CD14-positive monocyte (primary cell): ENCODE measurements at regions of chr18 and their contacts with region 1.

Region 1: DNA sequence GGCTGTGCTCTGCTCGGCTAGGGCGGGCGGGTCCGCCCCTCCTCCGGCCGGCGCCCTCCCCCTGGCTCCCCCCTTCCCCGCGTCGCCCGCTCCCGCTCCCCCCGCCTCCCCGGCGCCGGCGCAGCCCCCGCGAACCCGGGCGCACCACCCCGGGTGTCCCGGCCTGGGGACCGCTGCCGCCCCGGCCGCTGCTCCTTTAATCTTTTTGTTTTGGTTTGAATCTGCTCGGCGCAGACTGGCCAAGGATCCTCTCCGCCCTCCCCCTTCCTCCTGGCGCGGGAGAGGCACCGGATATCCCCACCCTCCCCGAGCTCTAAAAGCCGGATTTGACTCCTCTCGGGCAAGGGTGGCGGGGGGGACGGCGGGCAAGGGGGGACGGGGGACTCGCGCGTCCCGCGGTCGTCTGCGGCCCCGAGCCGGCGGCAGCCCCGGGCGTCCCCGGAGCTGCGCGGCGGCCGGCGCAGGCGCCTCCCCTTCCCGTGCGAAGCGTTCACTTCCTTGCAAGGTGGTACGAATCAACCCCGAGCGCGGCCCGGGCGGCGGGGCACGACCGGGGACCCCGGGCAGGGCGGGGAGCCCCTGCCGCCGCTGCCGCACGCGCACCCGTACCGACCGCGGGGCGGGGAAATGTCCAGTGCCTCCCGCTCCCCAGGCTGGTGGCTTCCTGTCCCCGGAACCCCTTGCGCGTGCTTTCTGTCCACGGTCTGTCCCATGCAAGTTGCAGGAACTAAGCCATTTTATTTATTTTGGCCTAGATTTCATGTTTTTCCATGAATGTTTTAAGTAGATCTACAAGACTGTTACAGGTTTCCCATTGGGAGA is at the start of gene PTGR3:
- DNase-seq: peak; percentile 46 to 62 (median 59)
- H3K4me3 ChIP-seq: peak within 1 kb of the TSS; percentile 67 to 91 (median 89)
- H3K4me3 Mint-ChIP-seq: peak within 1 kb of the TSS; percentile 95 to 97
- H3K27ac ChIP-seq: peak within 1 kb of the TSS; percentile 79 to 86
- H3K27ac Mint-ChIP-seq: peak within 1 kb of the TSS; percentile 88 to 94 (median 91)
- H3K4me1 ChIP-seq: peaks cover 49 to 73% of the 10 kb centered on the region in 2 donors
- H3K4me1 Mint-ChIP-seq: peaks cover 63% of the 10 kb centered on the region
- H3K27me3 ChIP-seq: peaks cover 16 to 29% of the 10 kb centered on the region in 2 donors
- H3K27me3 Mint-ChIP-seq: peaks cover 2 to 30% (median 18%) of the 10 kb centered on the region in 3 donors
- CTCF ChIP-seq: no peak
- polyA plus RNA-seq, gene PTGR3: 15.5 to 27.5 (median 23.6) TPM

Region 2: GRCh38 chr18:75070625-75071483 is 138.5 kb before region 1 on chr18:
- intact Hi-C with region 1: loop called (anchors 10 kb)
- DNase-seq: peak; percentile 96 to 99 (median 96)
- H3K4me3 ChIP-seq: peak overlapping the region; percentile 26 to 68 (median 33)
- H3K4me3 Mint-ChIP-seq: peak overlapping the region; percentile 77 to 91
- H3K27ac ChIP-seq: peak overlapping the region; percentile 95 to 97
- H3K27ac Mint-ChIP-seq: peak overlapping the region; percentile 87 to 99 (median 98)
- H3K4me1 ChIP-seq: peaks cover 41 to 46% of the 10 kb centered on the region in 2 donors
- H3K4me1 Mint-ChIP-seq: peaks cover 48% of the 10 kb centered on the region
- H3K27me3 ChIP-seq: no peaks in the 10 kb centered on the region
- H3K27me3 Mint-ChIP-seq: peaks cover 0 to 3% (median 2%) of the 10 kb centered on the region in 3 donors
- CTCF ChIP-seq: no peak

Region 3: GRCh38 chr18:75247611-75248421 is 38.5 kb after region 1 on chr18:
- intact Hi-C with region 1: loop called in 1 of 2 experiments (anchors 5 kb)
- DNase-seq: peak in 1 of 3 donors; percentile 7
- H3K4me3 ChIP-seq: peak overlapping the region; percentile 36 to 74 (median 70)
- H3K4me3 Mint-ChIP-seq: peak overlapping the region; percentile 81 to 92
- H3K27ac ChIP-seq: peak overlapping the region in 1 of 2 donors; percentile 75
- H3K27ac Mint-ChIP-seq: peak overlapping the region; percentile 65 to 94 (median 80)
- H3K4me1 ChIP-seq: peaks cover 21 to 28% of the 10 kb centered on the region in 2 donors
- H3K4me1 Mint-ChIP-seq: peaks cover 33% of the 10 kb centered on the region
- H3K27me3 ChIP-seq: no peaks in the 10 kb centered on the region
- H3K27me3 Mint-ChIP-seq: no peaks in the 10 kb centered on the region
- CTCF ChIP-seq: no peak

Region 4: GRCh38 chr18:75261430-75262223 is 52.3 kb after region 1 on chr18:
- intact Hi-C with region 1: loop called in 1 of 2 experiments (anchors 5 kb)
- DNase-seq: no peak
- H3K4me3 ChIP-seq: no peak overlapping the region
- H3K4me3 Mint-ChIP-seq: no peak overlapping the region
- H3K27ac ChIP-seq: peak overlapping the region in 1 of 2 donors; percentile 1
- H3K27ac Mint-ChIP-seq: peak overlapping the region in 4 of 7 donors; percentile 16 to 82 (median 62)
- H3K4me1 ChIP-seq: peaks cover 0 to 17% of the 10 kb centered on the region in 2 donors
- H3K4me1 Mint-ChIP-seq: peaks cover 21% of the 10 kb centered on the region
- H3K27me3 ChIP-seq: no peaks in the 10 kb centered on the region
- H3K27me3 Mint-ChIP-seq: no peaks in the 10 kb centered on the region
- CTCF ChIP-seq: no peak